Motor neuron (in vitro differentiated cells): ENCODE measurements at regions of chr2 and their contacts with region 1.

Region 1: DNA sequence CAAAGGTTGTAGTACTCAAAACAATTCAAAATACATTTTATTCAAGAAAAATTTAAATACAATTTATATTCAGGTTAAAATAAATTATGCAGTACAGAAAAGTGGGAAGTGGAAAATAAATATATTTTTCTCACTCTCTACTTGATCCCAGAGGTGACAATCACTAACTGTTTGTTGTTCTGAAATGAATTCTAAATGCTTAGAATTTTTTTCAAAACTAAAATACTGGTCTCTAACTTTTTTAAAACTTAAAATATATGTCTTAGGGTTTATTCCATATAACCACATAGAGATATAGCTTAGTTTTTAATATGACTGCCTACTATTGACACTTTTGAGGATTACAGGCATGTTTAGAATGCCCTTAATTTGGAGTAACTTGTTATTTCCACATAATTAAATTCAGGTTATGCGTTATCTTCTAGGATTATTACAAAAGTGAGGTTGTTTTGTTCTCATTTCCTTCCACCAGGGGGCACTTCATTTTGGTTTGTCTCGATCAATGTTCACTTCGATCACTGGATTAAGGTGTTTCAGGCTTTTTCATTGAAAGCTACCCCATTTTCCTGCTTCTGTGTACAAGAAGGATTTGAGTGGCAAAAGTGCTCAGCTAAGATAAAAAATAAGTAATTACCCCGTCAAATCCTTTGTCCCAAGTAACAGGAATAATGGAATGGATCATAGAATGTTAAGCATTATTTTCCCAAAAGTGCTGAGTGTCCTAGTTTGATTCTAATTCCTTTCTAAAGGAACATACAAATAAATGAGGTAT is 27.1 kb upstream of the TFPI start:
- ATAC-seq: peak in 3 of 8 experiments; percentile 39 to 50 (median 46)
- H3K4me3 ChIP-seq: no peak overlapping the region
- H3K27ac ChIP-seq: no peak overlapping the region
- H3K4me1 ChIP-seq: no peaks in the 10 kb centered on the region

Region 2: DNA sequence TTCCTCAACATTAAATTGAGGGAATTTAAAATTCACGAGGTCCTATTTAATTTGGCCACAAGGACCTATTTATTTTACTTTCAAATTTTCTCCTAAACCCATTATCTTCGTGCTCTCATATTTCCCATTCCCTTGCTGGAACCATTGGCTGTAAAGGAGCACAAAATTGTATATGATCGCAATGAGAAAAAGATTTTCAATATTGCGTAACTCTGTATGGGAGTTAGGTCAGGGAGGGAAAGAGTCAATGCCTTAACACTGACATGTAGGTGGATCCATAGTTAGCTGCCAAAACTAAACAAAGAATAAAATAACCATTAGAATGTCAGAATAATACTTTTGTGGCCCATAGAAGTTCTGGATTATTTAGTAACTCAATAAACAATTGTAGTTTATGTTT is 1135.8 kb before region 1 on chr2:
- in situ Hi-C with region 1: no loop called
- ATAC-seq: no peak
- H3K4me3 ChIP-seq: no peak overlapping the region
- H3K27ac ChIP-seq: no peak overlapping the region
- H3K4me1 ChIP-seq: peaks cover 0 to 4% of the 10 kb centered on the region in 2 donors

Region 3: GRCh38 chr2:187842978-187843847 is 261.9 kb after region 1 on chr2:
- in situ Hi-C with region 1: loop called in 1 of 9 experiments (anchors 25 kb)
- ATAC-seq: peak in 3 of 8 experiments; percentile 45 to 79 (median 66)
- H3K4me3 ChIP-seq: no peak overlapping the region
- H3K27ac ChIP-seq: no peak overlapping the region
- H3K4me1 ChIP-seq: no peaks in the 10 kb centered on the region